ENCODE measurements at regions of chr1 and their contacts with region 1.

Region 1: DNA sequence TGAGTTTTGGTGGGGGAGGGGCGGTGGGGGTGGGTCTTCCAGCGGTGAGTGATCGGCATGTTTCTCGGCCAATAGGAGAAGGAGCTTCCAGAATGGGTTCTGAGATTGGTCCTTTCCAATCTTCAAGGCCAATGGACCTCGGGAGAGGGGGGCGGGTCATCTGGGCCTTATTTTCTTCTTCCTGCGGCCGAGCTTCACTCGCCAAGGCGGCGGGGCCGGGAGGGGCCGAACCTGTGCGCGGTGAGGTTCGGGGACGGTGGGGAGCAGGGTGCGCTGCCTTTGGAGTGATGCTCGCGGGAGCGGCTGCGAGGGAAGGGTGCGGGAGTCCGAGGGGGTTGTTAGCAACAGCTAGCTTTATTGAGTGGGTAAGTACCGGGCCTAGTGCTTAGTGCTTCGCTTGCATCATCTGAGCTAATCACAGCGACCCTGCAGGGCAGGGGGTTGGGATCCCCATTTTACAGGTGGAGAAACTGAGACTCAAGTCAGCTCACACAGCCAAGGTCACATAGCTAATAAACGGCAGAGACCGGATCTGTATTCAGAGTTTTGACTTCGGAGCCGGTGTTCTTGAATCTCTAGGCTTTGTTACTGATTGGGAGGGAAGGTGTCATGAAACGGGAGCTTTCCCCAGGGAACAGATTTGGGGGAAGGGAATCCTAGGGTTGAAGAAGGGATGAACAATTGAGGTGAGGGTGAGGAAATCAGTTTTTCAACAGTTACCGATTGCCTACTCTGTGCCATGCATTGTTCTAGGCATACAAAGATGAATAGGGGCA is 549 bp downstream of the KDM4A start:
- DNase-seq: peak; percentile 97
- H3K4me3 Mint-ChIP-seq: peak overlapping the region; percentile 90
- H3K27ac Mint-ChIP-seq: peak overlapping the region; percentile 99
- H3K4me1 Mint-ChIP-seq: peaks cover 26% of the 10 kb centered on the region
- H3K27me3 Mint-ChIP-seq: no peaks in the 10 kb centered on the region

Region 2: DNA sequence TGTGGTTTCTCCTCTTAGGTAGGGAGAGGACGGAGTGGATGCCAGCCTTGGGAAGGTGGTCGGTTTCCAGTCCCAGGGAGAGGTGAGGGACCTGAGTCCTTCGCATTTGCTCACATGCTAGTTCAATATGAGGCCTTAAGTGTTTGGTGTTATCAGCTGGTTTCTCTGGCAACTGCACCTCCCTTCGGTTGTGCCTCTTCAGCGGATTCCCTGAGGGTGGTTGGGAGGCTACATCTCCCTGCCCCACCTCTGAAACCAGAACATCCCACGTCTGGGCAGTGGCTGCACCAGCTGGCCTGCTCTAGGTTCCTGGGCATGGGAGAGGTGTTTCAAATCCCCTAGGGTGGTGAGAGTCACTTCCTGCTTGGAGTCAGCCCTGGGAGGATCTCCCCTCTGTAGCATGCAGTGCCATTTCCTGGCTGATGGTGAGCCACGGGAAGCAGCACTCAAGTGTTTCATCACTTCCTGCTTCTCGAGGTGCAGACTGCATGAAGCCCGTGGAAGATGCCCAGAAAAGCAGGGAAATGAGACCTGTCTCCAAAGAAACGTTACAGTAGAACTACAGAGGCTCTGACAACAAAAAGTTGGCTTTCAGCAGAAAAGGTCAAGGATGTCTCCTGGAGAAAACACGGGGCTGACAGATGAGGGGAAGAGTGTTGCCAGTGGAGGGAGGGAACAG is 376.2 kb before region 1 on chr1:
- CTCF ChIA-PET with region 1: no interaction called
- intact Hi-C with region 1: loop called (anchors 5 kb)
- DNase-seq: peak; percentile 78
- H3K4me3 Mint-ChIP-seq: peak overlapping the region; percentile 57
- H3K27ac Mint-ChIP-seq: peak overlapping the region; percentile 77
- H3K4me1 Mint-ChIP-seq: peaks cover 28% of the 10 kb centered on the region
- H3K27me3 Mint-ChIP-seq: peaks cover 3% of the 10 kb centered on the region

Region 3: GRCh38 chr1:43358746-43359693 is 291.5 kb before region 1 on chr1 and contains the start of gene CDC20:
- CTCF ChIA-PET with region 1: no interaction called
- intact Hi-C with region 1: loop called (anchors 2 kb)
- DNase-seq: peak; percentile 100
- H3K4me3 Mint-ChIP-seq: peak within 1 kb of the TSS; percentile 94
- H3K27ac Mint-ChIP-seq: peak within 1 kb of the TSS; percentile 85
- H3K4me1 Mint-ChIP-seq: peaks cover 32% of the 10 kb centered on the region
- H3K27me3 Mint-ChIP-seq: no peaks in the 10 kb centered on the region
- total RNA-seq, gene CDC20: 179 to 194 TPM

Region 4: DNA sequence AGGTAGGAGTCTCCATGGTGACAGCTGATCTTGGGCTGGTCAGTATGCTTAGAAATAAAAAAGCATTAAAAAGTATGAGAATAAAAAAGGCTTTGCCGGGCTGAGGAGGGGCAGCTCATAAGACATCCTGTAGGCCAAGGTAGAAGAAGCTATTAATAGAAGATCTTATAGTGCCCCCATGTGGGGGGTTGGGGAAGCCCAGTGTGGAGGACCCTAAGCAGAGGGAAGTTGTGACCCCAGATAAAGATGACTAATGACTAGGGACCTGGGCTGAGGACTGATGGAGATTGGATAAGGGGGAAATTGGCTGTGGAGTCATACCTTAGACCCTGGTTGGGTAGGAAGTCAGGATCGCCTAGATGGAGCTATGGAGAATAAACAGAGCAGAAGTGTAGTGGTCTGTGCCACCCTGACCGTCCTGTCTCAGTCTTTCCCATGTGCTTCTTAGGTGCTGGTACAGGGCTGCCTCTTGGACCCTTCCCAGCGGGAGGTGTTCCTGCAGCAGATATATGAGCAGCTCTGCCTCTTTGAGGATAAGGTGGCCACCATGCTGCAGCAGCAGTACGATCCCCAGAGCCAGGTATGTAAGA is 235.8 kb before region 1 on chr1:
- CTCF ChIA-PET with region 1: no interaction called
- intact Hi-C with region 1: no loop called
- DNase-seq: peak; percentile 73
- H3K4me3 Mint-ChIP-seq: no peak overlapping the region
- H3K27ac Mint-ChIP-seq: no peak overlapping the region
- H3K4me1 Mint-ChIP-seq: no peaks in the 10 kb centered on the region
- H3K27me3 Mint-ChIP-seq: no peaks in the 10 kb centered on the region

Region 5: GRCh38 chr1:43529206-43529731 is 121.2 kb before region 1 on chr1:
- CTCF ChIA-PET with region 1: interaction called, 3 read pairs
- intact Hi-C with region 1: loop called (anchors 5 kb)
- DNase-seq: peak; percentile 91
- H3K4me3 Mint-ChIP-seq: no peak overlapping the region
- H3K27ac Mint-ChIP-seq: no peak overlapping the region
- H3K4me1 Mint-ChIP-seq: peaks cover 17% of the 10 kb centered on the region
- H3K27me3 Mint-ChIP-seq: peaks cover 36% of the 10 kb centered on the region

Region 6: GRCh38 chr1:43743206-43743605 is 92.7 kb after region 1 on chr1:
- CTCF ChIA-PET with region 1: no interaction called
- intact Hi-C with region 1: no loop called
- DNase-seq: no peak
- H3K4me3 Mint-ChIP-seq: no peak overlapping the region
- H3K27ac Mint-ChIP-seq: no peak overlapping the region
- H3K4me1 Mint-ChIP-seq: no peaks in the 10 kb centered on the region
- H3K27me3 Mint-ChIP-seq: no peaks in the 10 kb centered on the region

Region 7: GRCh38 chr1:43946236-43947060 is 295.9 kb after region 1 on chr1 and contains the start of gene IPO13:
- CTCF ChIA-PET with region 1: no interaction called
- intact Hi-C with region 1: loop called (anchors 1 kb)
- DNase-seq: peak; percentile 97
- H3K4me3 Mint-ChIP-seq: peak within 1 kb of the TSS; percentile 90
- H3K27ac Mint-ChIP-seq: peak within 1 kb of the TSS; percentile 88
- H3K4me1 Mint-ChIP-seq: peaks cover 39% of the 10 kb centered on the region
- H3K27me3 Mint-ChIP-seq: no peaks in the 10 kb centered on the region
- total RNA-seq, gene IPO13: 8.0 to 12.4 TPM

Region 8: GRCh38 chr1:43991476-43992231 is 341.2 kb after region 1 on chr1 and contains the start of gene CCDC24:
- CTCF ChIA-PET with region 1: no interaction called
- intact Hi-C with region 1: loop called (anchors 5 kb)
- DNase-seq: peak; percentile 74
- H3K4me3 Mint-ChIP-seq: peak within 1 kb of the TSS; percentile 89
- H3K27ac Mint-ChIP-seq: peak within 1 kb of the TSS; percentile 53
- H3K4me1 Mint-ChIP-seq: peaks cover 5% of the 10 kb centered on the region
- H3K27me3 Mint-ChIP-seq: no peaks in the 10 kb centered on the region
- total RNA-seq, gene CCDC24: 0.91 to 1.6 TPM

Measured in activated naive CD4-positive, alpha-beta T cell treated with anti-CD3 and anti-CD28 coated beads for 36 hours (primary cell).